AG04450 (cell line): ENCODE measurements at regions of chr2 and their contacts with region 1.

Region 1: DNA sequence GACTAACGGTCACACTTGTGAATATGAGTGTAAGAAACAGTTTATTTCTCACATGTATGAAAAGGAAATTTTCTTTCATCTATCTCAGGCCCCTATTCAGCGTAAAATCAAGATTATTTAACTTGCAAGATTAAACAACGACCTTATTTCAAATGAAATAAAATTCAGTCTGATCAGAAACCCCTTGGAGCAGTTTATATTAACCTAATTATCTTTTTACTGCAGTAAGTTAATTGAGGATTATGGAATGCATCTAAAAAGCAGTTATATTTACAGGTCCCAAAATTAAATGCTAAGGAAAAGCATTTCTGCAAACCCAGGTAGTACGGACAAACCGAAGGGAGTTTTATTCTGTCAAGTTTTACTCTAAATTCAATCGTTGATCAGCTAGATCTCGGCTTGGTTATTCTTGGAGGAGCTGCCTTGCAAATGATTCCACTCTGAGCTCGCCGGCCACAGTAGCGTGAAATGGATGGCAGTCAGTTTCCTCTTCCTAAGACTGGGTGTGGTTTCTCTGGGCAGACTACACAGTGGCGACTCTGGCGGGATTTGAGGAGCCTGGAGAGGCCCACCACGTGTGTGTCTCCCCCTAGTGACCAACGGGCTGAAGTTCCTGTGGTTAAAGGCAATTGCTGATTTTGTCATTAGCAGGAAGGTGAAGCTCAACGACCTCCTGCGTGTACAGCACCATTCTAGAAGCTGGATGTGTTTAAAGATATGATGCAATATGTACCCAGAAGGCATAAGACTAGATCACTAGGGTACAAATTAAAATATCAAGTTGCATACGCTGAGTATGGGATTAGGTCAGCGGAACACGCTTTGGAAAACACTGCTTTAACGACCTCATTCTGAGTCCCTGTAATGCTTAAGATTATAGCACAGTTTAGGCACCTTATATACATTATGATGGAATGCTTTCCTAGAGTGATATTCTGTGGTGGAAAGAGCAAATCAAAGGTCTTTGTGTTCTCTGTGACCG is 36.4 kb downstream of the PRKRA start:
- DNase-seq: peak; percentile 88
- H3K4me3 ChIP-seq: peak overlapping the region; percentile 55
- H3K27ac ChIP-seq: no peak overlapping the region
- H3K27me3 ChIP-seq: no peaks in the 10 kb centered on the region
- CTCF ChIP-seq: peak; percentile 96

Region 2: GRCh38 chr2:177708660-177709444 is 705.7 kb before region 1 on chr2:
- CTCF ChIA-PET with region 1: no interaction called
- POLR2A ChIA-PET with region 1: no interaction called
- DNase-seq: no peak
- H3K4me3 ChIP-seq: no peak overlapping the region
- H3K27ac ChIP-seq: no peak overlapping the region
- H3K27me3 ChIP-seq: peaks cover 2% of the 10 kb centered on the region
- CTCF ChIP-seq: no peak

Region 3: GRCh38 chr2:177983183-177983788 is 431.3 kb before region 1 on chr2:
- CTCF ChIA-PET with region 1: interaction called, 23 read pairs
- POLR2A ChIA-PET with region 1: no interaction called
- DNase-seq: peak; percentile 47
- H3K4me3 ChIP-seq: no peak overlapping the region
- H3K27ac ChIP-seq: no peak overlapping the region
- H3K27me3 ChIP-seq: no peaks in the 10 kb centered on the region
- CTCF ChIP-seq: peak; percentile 97

Region 4: GRCh38 chr2:178112202-178113152 is 302.1 kb before region 1 on chr2 and contains the start of gene RBM45:
- CTCF ChIA-PET with region 1: interaction called, 123 read pairs
- POLR2A ChIA-PET with region 1: interaction called, 7 read pairs
- DNase-seq: peak; percentile 81
- H3K4me3 ChIP-seq: peak within 1 kb of the TSS; percentile 99
- H3K27ac ChIP-seq: no peak within 1 kb of the TSS
- H3K27me3 ChIP-seq: no peaks in the 10 kb centered on the region
- CTCF ChIP-seq: peak; percentile 99
- polyA plus RNA-seq, gene RBM45: 13.0 and 21.9 TPM in 2 replicates

Region 5: DNA sequence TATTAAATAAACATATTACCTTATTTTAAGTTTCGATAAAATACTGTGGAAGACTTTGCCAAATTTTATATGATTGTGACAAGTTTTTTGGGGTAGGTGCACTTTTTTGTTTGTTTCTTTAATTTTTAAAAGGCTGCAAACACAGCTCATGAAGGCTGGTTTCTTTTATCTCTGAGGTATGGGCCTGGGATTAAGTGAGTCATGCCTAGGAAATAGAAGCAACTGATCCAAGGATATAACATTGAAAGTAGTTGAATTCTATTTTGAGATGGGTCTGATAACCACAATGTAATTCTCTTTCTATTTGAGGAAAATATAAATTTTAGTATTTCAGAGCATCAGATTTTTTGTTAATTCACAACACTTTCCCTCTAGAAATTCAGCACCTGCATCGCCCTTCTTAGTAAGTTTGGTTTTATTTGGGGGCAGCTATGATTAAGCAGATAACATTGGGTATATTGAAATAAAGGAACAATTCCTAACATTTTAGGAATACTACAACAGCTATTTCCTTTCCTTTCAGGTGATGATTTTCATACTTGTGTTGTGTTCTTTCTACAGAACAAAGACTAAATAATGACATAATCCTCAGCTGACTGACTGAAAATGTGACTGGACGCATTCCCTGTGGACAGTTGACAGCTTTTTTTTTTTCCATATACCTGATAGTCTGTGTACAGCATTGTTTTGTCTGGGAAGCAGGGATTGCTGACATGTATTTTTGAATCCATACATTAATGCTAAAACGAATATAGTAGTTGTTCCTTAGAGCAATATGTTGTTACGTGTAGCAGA is 285.5 kb before region 1 on chr2:
- CTCF ChIA-PET with region 1: interaction called, 292 read pairs
- POLR2A ChIA-PET with region 1: no interaction called
- DNase-seq: no peak
- H3K4me3 ChIP-seq: no peak overlapping the region
- H3K27ac ChIP-seq: no peak overlapping the region
- H3K27me3 ChIP-seq: no peaks in the 10 kb centered on the region
- CTCF ChIP-seq: no peak

Region 6: DNA sequence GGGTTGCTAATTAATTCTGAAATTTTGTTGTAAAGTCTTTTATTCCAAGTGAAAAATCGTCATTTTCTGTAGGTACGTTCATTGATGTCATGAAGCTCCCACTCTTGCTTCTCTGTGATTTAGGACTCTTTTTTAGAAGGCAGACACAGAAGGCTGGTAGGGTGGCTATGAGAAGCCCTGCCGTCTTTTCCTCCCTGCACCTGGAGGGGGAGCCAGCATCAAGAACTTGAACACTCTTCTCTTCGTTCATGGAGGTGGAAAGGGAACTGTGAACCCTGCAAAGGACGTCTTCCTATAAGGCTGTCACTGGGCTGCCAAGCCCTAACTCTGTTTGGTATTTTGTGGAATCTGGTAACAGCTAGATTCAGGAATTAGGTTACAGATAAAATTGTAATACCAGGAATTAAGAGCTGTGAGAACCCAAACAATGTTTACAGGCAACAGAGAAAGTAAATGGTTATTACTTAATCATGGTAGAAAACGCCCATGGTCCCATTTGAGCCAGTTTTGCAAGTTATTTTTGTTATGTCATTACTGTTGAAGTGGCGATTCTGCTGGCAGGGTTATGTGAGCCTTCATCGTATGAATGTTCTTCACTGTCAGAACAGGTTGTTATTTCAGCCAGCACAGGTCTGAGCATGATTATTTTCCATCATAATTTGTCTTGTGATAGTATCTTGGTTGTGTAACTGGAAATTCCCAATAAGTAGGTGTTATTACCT is 108.0 kb before region 1 on chr2:
- CTCF ChIA-PET with region 1: interaction called, 51 read pairs
- POLR2A ChIA-PET with region 1: no interaction called
- DNase-seq: no peak
- H3K4me3 ChIP-seq: no peak overlapping the region
- H3K27ac ChIP-seq: no peak overlapping the region
- H3K27me3 ChIP-seq: no peaks in the 10 kb centered on the region
- CTCF ChIP-seq: peak; percentile 75

Region 7: DNA sequence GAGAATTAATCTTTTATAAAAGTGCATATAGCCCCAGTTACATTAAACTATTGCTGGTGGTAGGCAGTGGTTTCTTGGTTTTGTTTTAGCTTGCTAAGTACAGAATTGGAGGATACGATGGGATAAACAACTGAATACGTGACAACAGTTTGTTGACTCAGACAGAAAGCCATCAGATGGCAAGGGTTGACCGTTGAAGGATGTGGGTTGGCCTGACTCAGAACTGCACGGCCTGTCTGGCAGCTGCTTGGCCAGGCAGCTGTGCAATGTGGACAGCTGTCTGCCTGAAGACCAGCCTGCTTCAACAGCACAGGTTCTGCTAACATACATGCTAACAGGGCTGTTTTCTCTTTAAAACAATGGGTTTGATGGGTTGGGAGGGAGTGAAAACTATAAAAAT is 10.2 kb before region 1 on chr2:
- CTCF ChIA-PET with region 1: interaction called, 389 read pairs
- POLR2A ChIA-PET with region 1: interaction called, 12 read pairs
- DNase-seq: peak; percentile 69
- H3K4me3 ChIP-seq: peak overlapping the region; percentile 2; the same call in 1 of the 2 replicates
- H3K27ac ChIP-seq: no peak overlapping the region
- H3K27me3 ChIP-seq: no peaks in the 10 kb centered on the region
- CTCF ChIP-seq: no peak

Region 8: DNA sequence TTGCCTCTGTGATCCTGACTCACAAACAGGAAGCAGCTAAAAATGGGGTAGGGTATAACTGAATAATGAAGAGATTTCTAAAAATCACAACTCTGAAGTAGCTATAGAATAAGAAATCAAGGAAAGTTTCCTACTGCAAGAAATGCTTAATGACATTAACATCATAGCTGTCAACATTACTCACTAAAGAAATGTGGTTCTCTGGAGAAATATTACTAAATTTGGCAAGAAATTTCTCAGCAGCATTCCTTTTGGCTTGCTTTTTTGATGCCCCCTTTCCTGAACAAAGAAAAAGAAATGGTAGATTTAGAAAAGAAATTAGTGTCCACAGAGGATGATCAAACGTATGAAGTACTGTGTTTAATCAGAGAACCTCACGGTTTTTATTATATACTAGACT is 26.9 kb after region 1 on chr2:
- CTCF ChIA-PET with region 1: interaction called, 20 read pairs
- POLR2A ChIA-PET with region 1: interaction called, 3 read pairs
- DNase-seq: no peak
- H3K4me3 ChIP-seq: no peak overlapping the region
- H3K27ac ChIP-seq: no peak overlapping the region
- H3K27me3 ChIP-seq: no peaks in the 10 kb centered on the region
- CTCF ChIP-seq: no peak

Region 9: GRCh38 chr2:178767094-178768060 is 352.8 kb after region 1 on chr2:
- CTCF ChIA-PET with region 1: no interaction called
- POLR2A ChIA-PET with region 1: no interaction called
- DNase-seq: no peak
- H3K4me3 ChIP-seq: no peak overlapping the region
- H3K27ac ChIP-seq: no peak overlapping the region
- H3K27me3 ChIP-seq: no peaks in the 10 kb centered on the region
- CTCF ChIP-seq: no peak